Mammary epithelial cell (primary cell): ENCODE measurements at regions of chr1 and their contacts with region 1.

Region 1: GRCh38 chr1:53754484-53755312 is 15.7 kb upstream of the GLIS1 start:
- DNase-seq: peak; percentile 38
- H3K4me3 ChIP-seq: no peak overlapping the region
- H3K27ac ChIP-seq: no peak overlapping the region
- H3K4me1 ChIP-seq: no peaks in the 10 kb centered on the region
- H3K27me3 ChIP-seq: no peaks in the 10 kb centered on the region
- CTCF ChIP-seq: peak; percentile 66 to 72

Region 2: GRCh38 chr1:53450225-53450624 is 304.5 kb before region 1 on chr1:
- CTCF ChIA-PET with region 1: no interaction called
- dilution Hi-C with region 1: no loop called
- in situ Hi-C with region 1: no loop called
- intact Hi-C with region 1: loop called (anchors 2 kb)
- DNase-seq: no peak
- H3K4me3 ChIP-seq: no peak overlapping the region
- H3K27ac ChIP-seq: no peak overlapping the region
- H3K4me1 ChIP-seq: no peaks in the 10 kb centered on the region
- H3K27me3 ChIP-seq: peaks cover 2% of the 10 kb centered on the region
- CTCF ChIP-seq: peak; percentile 45 to 46